GM18951 (cell line): ENCODE measurements at regions of chr17 and their contacts with region 1.

Region 1: DNA sequence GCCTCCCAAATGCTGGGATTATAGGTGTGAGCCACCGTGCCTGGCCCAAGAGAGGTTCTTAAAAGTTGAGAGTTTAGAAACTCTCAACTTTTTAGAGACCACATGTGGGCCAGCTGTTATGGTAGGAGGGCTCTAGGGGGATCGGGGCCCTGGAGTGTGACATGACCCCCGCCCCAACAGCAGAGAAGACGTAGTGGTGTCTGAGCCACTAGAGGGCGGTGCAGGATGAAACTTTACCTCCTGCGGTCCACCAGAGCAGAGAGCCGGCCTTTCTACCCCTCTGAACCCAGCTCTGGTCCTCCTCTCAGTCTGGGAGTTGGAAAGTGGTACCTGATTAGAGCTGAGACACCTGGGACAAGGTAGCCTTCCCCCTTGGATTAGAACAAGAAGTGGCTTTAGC is 7.4 kb downstream of the CDK5RAP3 start:
- POLR2A ChIP-seq: no peak

Region 2: DNA sequence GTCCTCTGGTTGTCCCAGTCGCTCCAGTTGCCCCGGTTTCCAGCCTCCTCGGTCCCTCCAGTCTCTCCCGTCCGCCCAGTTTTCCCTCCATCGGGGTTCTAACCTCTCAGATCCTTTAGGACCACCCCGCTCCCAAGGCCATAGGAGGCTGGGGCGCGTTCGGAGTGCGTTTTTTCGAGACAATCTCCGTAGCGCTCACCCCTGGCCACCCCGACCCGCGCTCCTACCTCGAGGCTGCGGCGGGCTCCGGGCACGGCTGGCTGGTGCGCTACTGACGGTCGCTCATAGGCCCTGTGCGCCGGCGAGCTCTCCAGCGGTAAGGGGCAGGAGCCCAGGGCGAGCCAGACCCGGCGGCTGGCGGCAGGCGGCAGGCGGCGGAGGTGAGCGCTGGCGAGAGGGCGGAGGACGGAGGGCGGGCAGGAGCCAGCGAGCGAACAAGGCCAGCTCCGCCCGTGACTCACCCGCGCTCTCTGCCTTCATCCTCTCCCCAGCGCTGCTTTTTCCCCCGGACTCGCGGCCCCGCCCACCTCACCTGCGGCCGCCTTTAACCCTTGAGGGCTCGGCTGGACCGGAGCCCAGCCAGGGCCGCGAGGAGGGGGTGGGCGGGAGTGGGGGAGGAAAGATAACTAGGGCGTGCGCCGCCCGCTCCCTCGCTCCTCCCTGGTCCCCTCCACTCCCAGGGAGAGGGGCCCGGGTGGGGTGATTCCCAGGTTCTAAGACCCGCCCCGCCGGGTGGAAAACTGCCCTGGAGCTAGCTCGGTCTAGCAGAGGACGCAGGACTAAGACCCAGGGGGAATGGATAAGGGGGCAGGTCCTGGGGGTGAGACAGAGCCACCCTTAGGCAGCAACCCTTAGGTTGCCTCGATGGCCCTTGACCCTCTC is 127.4 kb before region 1 on chr17 and contains the start of gene SP6:
- in situ Hi-C with region 1: no loop called
- POLR2A ChIP-seq: no peak

Region 3: GRCh38 chr17:48016112-48016511 is 37.8 kb after region 1 on chr17:
- in situ Hi-C with region 1: loop called (anchors 5 kb)
- POLR2A ChIP-seq: no peak

Region 4: GRCh38 chr17:48322060-48322459 is 343.7 kb after region 1 on chr17:
- in situ Hi-C with region 1: no loop called
- POLR2A ChIP-seq: no peak